Calu3 (cell line): ENCODE measurements at regions of chr2 and their contacts with region 1.

Region 1: GRCh38 chr2:226800941-226801784 is 1.5 kb upstream of the IRS1 start:
- DNase-seq: peak; percentile 94
- H3K4me3 Mint-ChIP-seq: peak overlapping the region; percentile 87
- H3K27ac Mint-ChIP-seq: peak overlapping the region; percentile 83
- H3K4me1 Mint-ChIP-seq: peaks cover 44% of the 10 kb centered on the region
- H3K27me3 Mint-ChIP-seq: no peaks in the 10 kb centered on the region
- CTCF ChIP-seq: no peak

Region 2: GRCh38 chr2:225668606-225669266 is 1132.4 kb before region 1 on chr2:
- CTCF ChIA-PET with region 1: interaction called, 14 read pairs
- intact Hi-C with region 1: loop called (anchors 1 kb)
- DNase-seq: peak; percentile 45
- H3K4me3 Mint-ChIP-seq: no peak overlapping the region
- H3K27ac Mint-ChIP-seq: no peak overlapping the region
- H3K4me1 Mint-ChIP-seq: no peaks in the 10 kb centered on the region
- H3K27me3 Mint-ChIP-seq: no peaks in the 10 kb centered on the region
- CTCF ChIP-seq: peak; percentile 65

Region 3: GRCh38 chr2:226118471-226119430 is 682.4 kb before region 1 on chr2:
- CTCF ChIA-PET with region 1: interaction called, 5 read pairs
- intact Hi-C with region 1: loop called (anchors 5 kb)
- DNase-seq: peak; percentile 10
- H3K4me3 Mint-ChIP-seq: peak overlapping the region; percentile 25
- H3K27ac Mint-ChIP-seq: peak overlapping the region; percentile 67
- H3K4me1 Mint-ChIP-seq: peaks cover 43% of the 10 kb centered on the region
- H3K27me3 Mint-ChIP-seq: no peaks in the 10 kb centered on the region
- CTCF ChIP-seq: no peak

Region 4: GRCh38 chr2:226478109-226478809 is 322.9 kb before region 1 on chr2:
- CTCF ChIA-PET with region 1: interaction called, 8 read pairs
- intact Hi-C with region 1: loop called (anchors 2 kb)
- DNase-seq: peak; percentile 76
- H3K4me3 Mint-ChIP-seq: no peak overlapping the region
- H3K27ac Mint-ChIP-seq: peak overlapping the region; percentile 85
- H3K4me1 Mint-ChIP-seq: peaks cover 62% of the 10 kb centered on the region
- H3K27me3 Mint-ChIP-seq: no peaks in the 10 kb centered on the region
- CTCF ChIP-seq: no peak

Region 5: DNA sequence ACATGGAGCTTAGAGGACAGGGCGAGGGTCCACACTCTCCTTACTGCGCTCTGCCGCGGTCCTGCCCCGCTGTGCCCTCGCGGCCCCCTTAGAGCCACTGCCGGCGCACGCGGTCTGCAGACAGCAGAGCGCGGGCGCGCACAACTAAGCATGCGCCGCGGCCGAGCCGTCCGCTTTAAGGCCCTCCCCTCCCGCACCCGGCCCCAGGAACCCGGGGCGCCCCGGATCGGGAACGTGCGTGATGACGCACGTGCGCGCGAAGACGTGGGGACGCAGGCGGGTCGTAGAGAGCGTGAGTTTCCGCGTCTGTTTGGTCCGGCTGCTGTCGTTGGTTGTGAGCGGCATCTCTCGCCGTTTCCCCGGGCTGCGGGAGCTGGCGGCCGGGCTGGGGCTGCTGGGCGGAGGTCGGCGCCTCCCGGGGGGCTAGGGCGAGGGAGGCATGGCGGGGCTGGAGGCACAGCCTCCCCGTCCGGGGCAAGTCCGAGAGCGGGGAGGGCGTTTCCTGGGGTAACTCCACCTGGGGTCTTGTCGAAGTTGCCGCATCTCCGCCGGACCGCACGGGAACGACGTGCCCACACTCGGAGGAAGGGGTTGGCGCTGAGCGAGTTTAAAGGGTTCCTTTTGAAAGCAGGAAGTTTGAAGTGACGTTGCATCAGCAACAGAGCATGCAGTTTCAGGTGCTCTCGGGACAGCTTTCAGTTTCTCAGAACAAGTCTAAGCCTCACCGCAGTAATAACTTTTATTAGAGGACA is 34.8 kb after region 1 on chr2 and contains the start of gene RHBDD1:
- CTCF ChIA-PET with region 1: no interaction called
- intact Hi-C with region 1: loop called (anchors 1 kb)
- DNase-seq: peak; percentile 95
- H3K4me3 Mint-ChIP-seq: peak within 1 kb of the TSS; percentile 98
- H3K27ac Mint-ChIP-seq: peak within 1 kb of the TSS; percentile 98
- H3K4me1 Mint-ChIP-seq: peaks cover 18% of the 10 kb centered on the region
- H3K27me3 Mint-ChIP-seq: no peaks in the 10 kb centered on the region
- CTCF ChIP-seq: no peak
- total RNA-seq, gene RHBDD1: 28.7 and 32.8 TPM in 2 replicates